IMR-90 (cell line): ENCODE measurements at regions of chr12 and their contacts with region 1.

Region 1: GRCh38 chr12:121626087-121626852 is at the start of gene ORAI1:
- DNase-seq: peak; percentile 91
- ATAC-seq: peak; percentile 91
- H3K4me3 ChIP-seq: peak within 1 kb of the TSS; percentile 73
- H3K27ac ChIP-seq: peak within 1 kb of the TSS; percentile 71
- H3K4me1 ChIP-seq: peaks cover 15% of the 10 kb centered on the region
- H3K27me3 ChIP-seq: no peaks in the 10 kb centered on the region
- CTCF ChIP-seq: peak; percentile 25
- POLR2A ChIP-seq: no peak
- RAD21 ChIP-seq: no peak
- total RNA-seq, gene ORAI1: 3.9 and 4.4 TPM in 2 replicates

Region 2: DNA sequence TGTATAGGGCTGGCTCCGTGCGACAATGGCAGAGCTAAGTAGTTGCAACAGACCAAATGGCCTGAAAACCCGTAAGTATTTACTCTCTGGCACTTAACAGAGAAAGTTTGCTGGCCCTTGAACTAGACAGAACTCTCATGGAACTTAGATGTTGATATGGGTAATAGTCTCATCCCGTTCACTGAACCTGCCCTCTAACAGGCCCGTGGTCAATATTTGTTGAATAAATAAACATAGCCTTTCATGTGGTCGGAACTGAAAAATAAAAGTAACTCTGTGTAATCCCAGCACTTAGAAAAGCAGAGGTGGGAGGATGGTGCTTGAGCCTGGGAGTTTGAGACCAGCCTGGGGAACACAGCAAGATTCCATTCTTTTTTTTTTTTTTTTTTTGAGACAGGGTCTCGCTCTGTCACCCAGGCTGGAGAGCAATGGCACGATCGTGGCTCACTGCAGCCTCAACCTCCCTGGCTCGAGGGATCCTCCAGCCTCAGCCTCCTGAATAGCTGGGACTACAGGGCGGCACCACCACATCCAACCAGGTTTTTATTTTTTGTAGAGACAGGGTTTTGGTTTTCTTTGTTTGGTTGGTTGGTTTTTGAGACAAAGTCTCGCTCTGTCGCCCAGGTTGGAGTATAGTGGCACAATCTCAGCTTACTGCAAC is 75.2 kb before region 1 on chr12:
- CTCF ChIA-PET with region 1: interaction called, 12 read pairs
- POLR2A ChIA-PET with region 1: no interaction called
- dilution Hi-C with region 1: no loop called
- in situ Hi-C with region 1: no loop called
- intact Hi-C with region 1: loop called (anchors 1 kb)
- DNase-seq: no peak
- ATAC-seq: no peak
- H3K4me3 ChIP-seq: no peak overlapping the region
- H3K27ac ChIP-seq: no peak overlapping the region
- H3K4me1 ChIP-seq: no peaks in the 10 kb centered on the region
- H3K27me3 ChIP-seq: no peaks in the 10 kb centered on the region
- CTCF ChIP-seq: no peak
- POLR2A ChIP-seq: no peak
- RAD21 ChIP-seq: no peak

Region 3: DNA sequence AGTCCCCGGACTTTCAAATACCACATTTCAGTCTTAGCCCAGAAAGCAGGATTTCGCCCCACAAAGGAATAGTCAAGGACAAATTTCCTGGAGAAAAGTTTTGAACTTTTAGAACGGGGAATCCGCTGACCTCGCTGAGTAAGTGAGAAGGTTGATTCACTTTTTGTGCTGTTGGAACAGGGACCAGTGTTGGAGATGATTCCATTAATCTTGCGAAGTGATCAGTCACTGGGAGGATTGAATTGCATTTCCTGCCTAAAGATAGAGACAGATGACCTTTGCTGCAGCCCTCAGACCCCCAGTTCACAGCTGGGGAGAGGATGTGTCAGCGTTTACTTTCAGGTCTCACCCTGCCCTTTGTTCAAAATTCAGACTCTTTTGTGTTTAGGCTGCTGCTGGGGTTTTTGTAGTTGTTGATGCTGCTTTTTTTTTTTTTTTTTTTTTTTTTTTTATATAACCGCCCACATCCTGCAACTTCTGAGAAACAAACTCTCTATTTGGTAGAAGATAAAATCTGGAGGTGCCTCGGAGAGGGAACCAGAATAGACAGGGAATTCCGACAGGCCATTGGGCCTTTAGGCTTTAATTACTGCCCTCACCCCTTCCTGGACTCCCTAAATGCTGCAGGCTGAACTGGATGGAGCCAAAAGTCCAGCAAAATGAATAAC is 35.7 kb before region 1 on chr12:
- CTCF ChIA-PET with region 1: no interaction called
- POLR2A ChIA-PET with region 1: no interaction called
- dilution Hi-C with region 1: no loop called
- in situ Hi-C with region 1: no loop called
- intact Hi-C with region 1: loop called (anchors 2 kb)
- DNase-seq: peak; percentile 69
- ATAC-seq: peak; percentile 64
- H3K4me3 ChIP-seq: peak overlapping the region; percentile 4; the same call in 1 of the 2 replicates
- H3K27ac ChIP-seq: peak overlapping the region; percentile 92
- H3K4me1 ChIP-seq: peaks cover 5% of the 10 kb centered on the region
- H3K27me3 ChIP-seq: no peaks in the 10 kb centered on the region
- CTCF ChIP-seq: no peak
- POLR2A ChIP-seq: no peak
- RAD21 ChIP-seq: no peak